ENCODE measurements at regions of chr20 and their contacts with region 1.

Region 1: DNA sequence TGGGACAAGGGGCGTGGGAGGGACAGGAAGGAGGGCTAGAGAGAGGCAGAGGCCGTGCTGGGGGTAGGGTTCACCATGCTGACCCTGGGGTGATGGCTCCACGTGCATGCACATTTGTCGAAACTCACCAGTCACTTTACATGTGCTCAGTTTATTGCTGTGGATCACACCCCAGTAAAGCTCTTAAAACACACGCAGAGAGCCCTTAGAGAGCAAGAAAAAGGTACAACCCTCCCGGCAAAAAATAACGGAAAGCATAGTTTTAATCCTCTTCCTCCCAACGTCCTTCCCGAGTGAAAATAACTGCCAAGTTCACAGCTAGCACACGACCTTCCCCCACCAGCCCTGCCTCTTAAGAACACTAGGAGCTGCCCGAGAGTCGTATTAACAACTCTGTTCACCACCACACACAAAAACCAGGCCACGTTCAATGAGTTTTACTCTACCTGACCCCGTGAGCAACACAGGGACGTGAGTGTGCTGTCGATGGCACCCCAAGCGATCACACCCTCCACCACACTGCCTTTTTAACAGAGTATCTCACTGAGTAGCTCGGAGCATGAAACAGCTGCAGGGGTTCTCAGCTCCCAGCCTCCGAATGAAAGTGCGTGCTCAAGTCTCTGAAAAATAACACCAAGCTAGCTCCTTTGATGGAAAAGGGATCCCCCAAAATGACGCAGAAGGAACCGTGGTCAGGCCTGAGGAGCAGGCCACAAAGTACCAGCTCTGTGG is 39.7 kb downstream of the TAF4 start:
- DNase-seq: peak; percentile 78
- H3K4me3 ChIP-seq: no peak overlapping the region
- H3K27ac ChIP-seq: no peak overlapping the region
- H3K4me1 ChIP-seq: peaks cover 10% of the 10 kb centered on the region
- H3K27me3 ChIP-seq: no peaks in the 10 kb centered on the region
- CTCF ChIP-seq: peak; percentile 65 to 85
- POLR2A ChIP-seq: no peak

Region 2: DNA sequence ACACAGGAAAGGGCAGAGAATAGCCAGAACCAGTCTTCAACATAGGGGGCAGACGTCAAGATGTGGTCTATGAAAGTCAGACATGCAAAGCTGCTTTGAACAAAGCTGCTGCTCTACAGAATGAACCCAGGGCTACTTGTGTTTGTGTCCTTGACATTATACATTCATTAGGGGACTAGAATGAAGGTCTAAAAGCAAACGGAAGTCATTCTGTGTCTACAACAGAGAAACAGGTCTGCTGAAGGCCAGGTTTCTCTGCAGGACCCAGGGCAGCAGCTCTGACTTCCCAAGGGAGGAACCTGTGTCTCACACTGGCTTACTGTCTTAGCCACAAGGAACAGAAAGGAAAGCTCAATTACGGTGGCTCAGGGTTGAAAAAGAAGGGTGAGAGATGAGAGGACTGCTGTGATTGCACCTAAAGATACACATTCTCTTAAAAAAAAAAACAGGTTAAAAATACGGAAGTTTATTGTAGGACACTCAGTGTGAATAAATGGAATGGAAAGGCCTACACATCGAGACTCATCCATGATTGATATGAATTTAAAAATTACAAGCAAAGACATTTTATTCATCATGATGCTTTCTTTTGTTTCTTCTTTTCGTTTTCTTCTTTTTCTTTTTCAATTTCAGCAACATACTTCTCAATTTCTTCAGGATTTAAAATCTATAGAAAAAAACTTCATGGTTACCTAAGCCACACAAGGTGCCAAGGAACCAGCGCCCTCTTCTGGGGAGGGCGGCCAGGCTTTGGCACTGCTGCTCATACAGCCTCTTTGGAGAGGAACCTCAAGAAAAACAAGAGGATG is 110.5 kb after region 1 on chr20:
- CTCF ChIA-PET with region 1: interaction called, 25 read pairs
- POLR2A ChIA-PET with region 1: no interaction called
- dilution Hi-C with region 1: no loop called
- intact Hi-C with region 1: loop called (anchors 1 kb)
- DNase-seq: peak; percentile 84
- H3K4me3 ChIP-seq: no peak overlapping the region
- H3K27ac ChIP-seq: no peak overlapping the region
- H3K4me1 ChIP-seq: no peaks in the 10 kb centered on the region
- H3K27me3 ChIP-seq: no peaks in the 10 kb centered on the region
- CTCF ChIP-seq: peak; percentile 81
- POLR2A ChIP-seq: no peak

Region 3: GRCh38 chr20:62156592-62157386 is 130.8 kb after region 1 on chr20:
- CTCF ChIA-PET with region 1: interaction called, 12 read pairs
- POLR2A ChIA-PET with region 1: no interaction called
- dilution Hi-C with region 1: no loop called
- intact Hi-C with region 1: loop called (anchors 1 kb)
- DNase-seq: peak; percentile 48
- H3K4me3 ChIP-seq: no peak overlapping the region
- H3K27ac ChIP-seq: no peak overlapping the region
- H3K4me1 ChIP-seq: no peaks in the 10 kb centered on the region
- H3K27me3 ChIP-seq: no peaks in the 10 kb centered on the region
- CTCF ChIP-seq: peak; percentile 69 to 92
- POLR2A ChIP-seq: no peak

Region 4: GRCh38 chr20:62395311-62396242 is 369.6 kb after region 1 on chr20:
- CTCF ChIA-PET with region 1: no interaction called
- POLR2A ChIA-PET with region 1: no interaction called
- dilution Hi-C with region 1: no loop called
- intact Hi-C with region 1: no loop called
- DNase-seq: no peak
- H3K4me3 ChIP-seq: no peak overlapping the region
- H3K27ac ChIP-seq: no peak overlapping the region
- H3K4me1 ChIP-seq: no peaks in the 10 kb centered on the region
- H3K27me3 ChIP-seq: no peaks in the 10 kb centered on the region
- CTCF ChIP-seq: no peak
- POLR2A ChIP-seq: no peak